ENCODE measurements at regions of chr2 and their contacts with region 1.

Region 1: GRCh38 chr2:49845021-49845420 is 690.7 kb upstream of the FSHR start:
- DNase-seq: no peak
- H3K4me3 ChIP-seq: no peak overlapping the region
- H3K27ac ChIP-seq: no peak overlapping the region
- H3K4me1 ChIP-seq: no peaks in the 10 kb centered on the region
- H3K27me3 ChIP-seq: no peaks in the 10 kb centered on the region
- CTCF ChIP-seq: no peak

Region 2: GRCh38 chr2:49801898-49802450 is 43.0 kb before region 1 on chr2:
- CTCF ChIA-PET with region 1: no interaction called
- dilution Hi-C with region 1: loop called (anchors 5 kb)
- in situ Hi-C with region 1: no loop called
- intact Hi-C with region 1: no loop called
- DNase-seq: no peak
- H3K4me3 ChIP-seq: no peak overlapping the region
- H3K27ac ChIP-seq: no peak overlapping the region
- H3K4me1 ChIP-seq: no peaks in the 10 kb centered on the region
- H3K27me3 ChIP-seq: no peaks in the 10 kb centered on the region
- CTCF ChIP-seq: no peak

Region 3: GRCh38 chr2:49812730-49813129 is 32.3 kb before region 1 on chr2:
- CTCF ChIA-PET with region 1: no interaction called
- dilution Hi-C with region 1: no loop called
- in situ Hi-C with region 1: no loop called
- intact Hi-C with region 1: no loop called
- DNase-seq: no peak
- H3K4me3 ChIP-seq: no peak overlapping the region
- H3K27ac ChIP-seq: no peak overlapping the region
- H3K4me1 ChIP-seq: no peaks in the 10 kb centered on the region
- H3K27me3 ChIP-seq: no peaks in the 10 kb centered on the region
- CTCF ChIP-seq: no peak

Measured in mammary epithelial cell (primary cell).